MCF 10A (cell line): ENCODE measurements at regions of chr1 and their contacts with region 1.

Region 1: GRCh38 chr1:93919780-93920179 is 10.6 kb upstream of the GCLM start:
- DNase-seq: no peak
- H3K4me3 Mint-ChIP-seq: no peak overlapping the region
- H3K27ac Mint-ChIP-seq: no peak overlapping the region
- H3K4me1 Mint-ChIP-seq: no peaks in the 10 kb centered on the region
- H3K27me3 Mint-ChIP-seq: peaks cover under 1% of the 10 kb centered on the region
- CTCF ChIP-seq: no peak

Region 2: GRCh38 chr1:94004924-94005323 is 85.1 kb after region 1 on chr1:
- CTCF ChIA-PET with region 1: no interaction called
- POLR2A ChIA-PET with region 1: no interaction called
- intact Hi-C with region 1: loop called (anchors 10 kb)
- DNase-seq: peak; percentile 75
- H3K4me3 Mint-ChIP-seq: no peak overlapping the region
- H3K27ac Mint-ChIP-seq: no peak overlapping the region
- H3K4me1 Mint-ChIP-seq: peaks cover 17% of the 10 kb centered on the region
- H3K27me3 Mint-ChIP-seq: no peaks in the 10 kb centered on the region
- CTCF ChIP-seq: no peak